ENCODE measurements at regions of chr5 and their contacts with region 1.

Region 1: GRCh38 chr5:64074533-64074932 is 91.1 kb upstream of the RNF180 start:
- DNase-seq: no peak
- H3K4me3 ChIP-seq: no peak overlapping the region
- H3K27ac ChIP-seq: no peak overlapping the region
- H3K4me1 ChIP-seq: no peaks in the 10 kb centered on the region
- H3K27me3 ChIP-seq: no peaks in the 10 kb centered on the region
- CTCF ChIP-seq: peak in 1 of 3 donors; percentile 10
- POLR2A ChIP-seq: no peak

Region 2: DNA sequence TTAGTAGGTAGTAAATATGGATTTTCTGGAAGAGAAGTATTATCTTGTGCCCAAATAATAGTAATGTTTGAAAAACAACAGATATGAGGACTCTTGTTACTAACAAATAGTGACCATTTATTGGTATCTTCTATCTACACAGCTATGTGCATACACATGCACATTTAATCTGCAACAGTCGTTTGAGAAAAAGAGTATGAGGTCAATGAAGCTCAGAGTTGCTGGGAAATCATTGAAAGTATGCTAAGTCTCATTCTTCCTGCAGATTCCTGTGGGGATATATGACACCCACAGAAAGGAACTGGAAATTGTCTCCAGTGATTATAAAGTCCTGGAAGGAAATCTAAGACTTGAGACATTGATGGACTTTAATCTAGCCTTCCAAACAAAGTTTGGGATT is 51.0 kb after region 1 on chr5:
- intact Hi-C with region 1: loop called (anchors 2 kb)
- DNase-seq: no peak
- H3K4me3 ChIP-seq: no peak overlapping the region
- H3K27ac ChIP-seq: no peak overlapping the region
- H3K4me1 ChIP-seq: no peaks in the 10 kb centered on the region
- H3K27me3 ChIP-seq: no peaks in the 10 kb centered on the region
- CTCF ChIP-seq: no peak
- POLR2A ChIP-seq: no peak

Measured in breast epithelium (tissue), 4 donors.